HEK293T (cell line): ENCODE measurements at regions of chr5 and their contacts with region 1.

Region 1: DNA sequence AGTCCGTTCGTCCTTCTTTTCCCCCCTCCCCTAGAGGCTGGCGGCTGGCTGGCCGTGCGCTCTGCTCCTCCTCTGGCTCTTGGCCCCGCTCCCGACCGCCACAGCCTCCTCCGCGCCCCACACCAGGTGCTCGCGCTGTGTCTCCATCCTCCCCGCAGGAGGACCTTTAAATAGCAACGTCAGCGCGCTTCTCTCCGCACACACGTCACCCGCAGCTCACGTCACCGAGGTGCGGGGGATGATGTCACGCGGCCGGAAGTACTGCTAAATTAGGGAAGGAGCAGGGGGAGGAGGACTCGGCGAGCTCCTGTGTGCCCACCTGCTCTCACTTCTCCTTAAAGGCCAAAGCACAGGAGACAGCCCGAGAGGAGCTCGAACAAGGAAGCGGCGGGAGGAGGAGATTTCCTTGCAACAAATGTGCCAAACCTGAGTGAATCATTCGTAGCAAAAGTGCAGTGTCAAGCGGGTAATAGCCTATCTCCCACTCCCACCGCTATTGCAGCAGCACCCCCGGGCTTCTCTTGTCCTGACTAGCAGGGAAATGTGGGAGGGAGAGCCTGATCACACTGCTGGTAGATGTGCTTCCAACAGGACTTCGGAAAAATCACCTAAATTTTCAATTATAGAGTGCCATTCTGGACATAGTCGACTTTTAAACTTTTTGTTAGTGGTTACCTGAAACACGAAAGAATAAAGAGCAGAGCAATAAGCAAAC is 614 bp upstream of the HOMER1 start:
- DNase-seq: peak; percentile 84

Region 2: DNA sequence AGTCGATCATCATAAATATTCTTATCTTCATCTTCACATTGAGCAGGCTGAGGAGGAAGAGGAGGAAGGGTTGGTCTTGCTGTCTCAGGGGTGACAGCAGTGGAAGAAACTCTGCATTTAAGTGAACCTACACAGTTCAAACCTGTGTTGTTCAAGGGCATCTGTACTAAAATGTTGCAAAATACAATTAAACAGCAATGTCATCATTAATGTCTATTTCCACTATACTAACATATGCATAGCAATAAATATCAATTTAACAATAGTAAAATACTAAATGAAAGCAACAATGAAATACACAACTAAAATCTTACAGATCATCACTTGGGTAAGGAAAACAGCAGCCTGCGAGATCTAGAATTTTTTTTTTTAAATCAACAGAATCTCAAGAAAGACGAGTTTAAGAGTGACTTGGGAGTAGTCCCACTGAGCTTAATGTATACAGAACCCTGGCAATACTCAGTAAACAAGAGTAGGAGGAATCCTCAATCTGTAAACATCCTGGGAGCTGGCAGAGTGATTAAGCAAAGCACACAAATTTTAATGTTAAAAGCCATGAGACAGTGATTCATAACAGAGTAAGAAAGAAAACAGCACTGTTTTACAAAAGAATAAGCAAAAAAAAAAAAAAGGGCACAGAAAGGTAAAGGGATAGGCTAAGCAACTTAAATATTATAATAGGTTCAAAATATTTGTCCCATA is 10.6 kb before region 1 on chr5:
- CTCF ChIA-PET with region 1: interaction called, 5 read pairs
- POLR2A ChIA-PET with region 1: interaction called, 18 read pairs
- DNase-seq: no peak

Region 3: GRCh38 chr5:79582186-79582585 is 67.6 kb after region 1 on chr5:
- CTCF ChIA-PET with region 1: no interaction called
- POLR2A ChIA-PET with region 1: no interaction called
- DNase-seq: peak; percentile 35

Region 4: GRCh38 chr5:79612667-79613198 is 98.2 kb after region 1 on chr5:
- CTCF ChIA-PET with region 1: no interaction called
- POLR2A ChIA-PET with region 1: interaction called, 17 read pairs
- DNase-seq: no peak

Region 5: DNA sequence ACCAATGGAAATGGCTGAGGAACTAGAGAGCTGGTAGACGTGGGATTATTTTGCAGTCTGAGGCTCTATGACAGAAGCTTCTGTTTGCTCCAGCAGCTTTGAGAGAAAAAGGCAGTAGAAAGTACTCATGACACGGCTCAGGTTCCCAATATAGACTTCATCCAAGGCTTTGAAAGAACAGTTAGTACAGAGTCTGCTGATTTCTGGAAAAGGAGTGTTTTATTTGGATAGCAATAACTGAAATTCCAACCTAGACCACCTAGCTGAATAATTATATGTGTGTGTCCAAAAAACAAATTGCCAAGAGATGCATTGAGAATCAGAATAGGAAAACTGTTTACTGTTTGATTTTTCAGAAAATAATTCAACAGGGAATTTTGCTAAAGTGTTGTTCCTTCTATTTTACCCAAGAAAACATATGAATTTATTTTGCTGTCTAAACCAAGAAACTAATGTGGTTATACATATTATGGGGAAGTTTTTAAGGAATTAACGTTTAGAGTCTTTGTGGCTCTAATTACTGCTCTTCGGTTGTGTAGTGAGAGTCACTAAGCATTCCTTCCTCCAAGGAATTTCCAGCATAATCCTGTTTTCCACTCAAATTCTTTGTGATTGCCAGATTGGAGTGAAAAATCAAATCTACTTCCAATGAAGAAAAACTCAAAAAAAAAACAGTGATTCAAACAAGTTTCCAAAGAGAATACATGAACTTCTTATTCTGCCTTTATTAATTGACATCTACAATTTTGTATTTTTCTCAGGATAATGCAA is 494.6 kb after region 1 on chr5:
- CTCF ChIA-PET with region 1: no interaction called
- POLR2A ChIA-PET with region 1: no interaction called
- DNase-seq: no peak